Heart left ventricle (tissue), 16 donors: ENCODE measurements at regions of chr11 and their contacts with region 1.

Region 1: GRCh38 chr11:14544611-14545010 is 24.4 kb upstream of the PSMA1 start:
- DNase-seq: no peak
- ATAC-seq: no peak
- H3K4me3 ChIP-seq: no peak overlapping the region
- H3K27ac ChIP-seq: no peak overlapping the region
- H3K4me1 ChIP-seq: peaks cover 0 to 40% (median 17%) of the 10 kb centered on the region in 12 donors
- H3K27me3 ChIP-seq: no peaks in the 10 kb centered on the region
- CTCF ChIP-seq: no peak
- POLR2A ChIP-seq: no peak

Region 2: DNA sequence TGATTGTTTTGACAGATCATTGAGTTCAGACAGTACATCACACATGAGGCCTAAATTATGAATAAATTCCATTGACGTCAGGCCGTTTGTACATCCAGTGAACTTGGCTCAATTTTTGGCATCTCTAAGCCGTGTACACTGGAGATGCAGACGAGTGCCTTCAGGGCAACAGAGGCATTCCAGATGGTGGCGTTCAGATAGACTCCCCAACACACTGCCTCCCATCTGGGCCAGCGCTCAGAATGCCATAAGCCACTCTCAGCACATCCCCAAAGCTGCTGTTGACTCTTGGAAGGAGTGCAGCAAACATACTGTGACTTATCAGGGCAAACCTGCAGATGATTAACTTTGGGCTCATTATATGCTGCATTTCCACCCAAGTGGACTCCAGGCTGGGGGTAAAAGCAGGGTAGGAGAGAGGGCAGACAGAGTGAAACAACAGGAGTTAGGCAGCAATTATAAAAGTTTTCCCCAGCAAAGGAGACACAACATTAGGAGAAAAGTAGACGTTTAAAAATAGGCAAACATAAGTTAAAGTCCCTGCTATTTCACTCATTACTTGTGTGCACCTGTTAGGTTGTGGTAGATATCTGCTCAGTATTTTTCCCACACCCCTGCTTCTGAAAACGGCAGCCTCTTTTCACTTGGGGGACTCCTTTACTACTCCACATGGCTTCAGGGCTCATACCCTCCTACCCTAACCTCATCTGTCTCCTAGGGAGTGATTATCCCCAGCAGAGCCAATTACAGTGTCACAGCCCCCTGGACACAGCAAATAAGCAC is 38.8 kb after region 1 on chr11:
- intact Hi-C with region 1: loop called in 1 of 10 experiments (anchors 5 kb)
- DNase-seq: peak in 3 of 5 donors; percentile 12 to 66 (median 48)
- ATAC-seq: peak; percentile 57 to 89 (median 78)
- H3K4me3 ChIP-seq: no peak overlapping the region
- H3K27ac ChIP-seq: peak overlapping the region in 4 of 12 donors; percentile 11 to 63 (median 42)
- H3K4me1 ChIP-seq: peaks cover 0 to 15% (median 6%) of the 10 kb centered on the region in 12 donors
- H3K27me3 ChIP-seq: no peaks in the 10 kb centered on the region
- CTCF ChIP-seq: no peak
- POLR2A ChIP-seq: no peak

Region 3: GRCh38 chr11:14672635-14673034 is 128.0 kb after region 1 on chr11:
- intact Hi-C with region 1: no loop called
- DNase-seq: no peak
- ATAC-seq: no peak
- H3K4me3 ChIP-seq: no peak overlapping the region
- H3K27ac ChIP-seq: peak overlapping the region in 1 of 12 donors; percentile 26
- H3K4me1 ChIP-seq: peaks cover 0 to 5% (median 0%) of the 10 kb centered on the region in 12 donors
- H3K27me3 ChIP-seq: no peaks in the 10 kb centered on the region
- CTCF ChIP-seq: no peak
- POLR2A ChIP-seq: no peak

Region 4: DNA sequence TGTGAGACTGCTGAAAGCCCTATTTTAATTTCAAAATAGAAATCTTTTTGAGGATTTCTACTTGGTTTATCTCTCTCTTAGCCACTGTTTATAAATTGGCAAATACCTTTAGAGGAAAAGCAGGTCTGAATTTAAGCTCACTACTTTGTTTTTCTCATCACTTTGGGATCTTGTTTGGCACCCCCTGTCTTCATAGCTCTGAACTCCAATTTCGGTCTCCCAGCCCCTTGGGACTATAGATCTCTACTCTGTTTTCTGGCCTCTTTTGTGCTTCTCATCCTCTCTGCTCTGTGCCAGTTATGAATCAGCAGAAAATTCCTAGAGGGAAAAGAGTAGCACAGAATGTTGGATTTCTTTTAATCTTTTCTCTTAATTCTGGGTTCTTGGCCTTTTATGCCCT is 229.1 kb after region 1 on chr11:
- intact Hi-C with region 1: loop called in 2 of 10 experiments (anchors 10 kb)
- DNase-seq: no peak
- ATAC-seq: no peak
- H3K4me3 ChIP-seq: no peak overlapping the region
- H3K27ac ChIP-seq: no peak overlapping the region
- H3K4me1 ChIP-seq: peaks cover 0 to 7% (median 0%) of the 10 kb centered on the region in 12 donors
- H3K27me3 ChIP-seq: no peaks in the 10 kb centered on the region
- CTCF ChIP-seq: peak in 3 of 12 donors; percentile 10 to 15 (median 12)
- POLR2A ChIP-seq: no peak